ENCODE measurements at regions of chr7 and their contacts with region 1.

Region 1: DNA sequence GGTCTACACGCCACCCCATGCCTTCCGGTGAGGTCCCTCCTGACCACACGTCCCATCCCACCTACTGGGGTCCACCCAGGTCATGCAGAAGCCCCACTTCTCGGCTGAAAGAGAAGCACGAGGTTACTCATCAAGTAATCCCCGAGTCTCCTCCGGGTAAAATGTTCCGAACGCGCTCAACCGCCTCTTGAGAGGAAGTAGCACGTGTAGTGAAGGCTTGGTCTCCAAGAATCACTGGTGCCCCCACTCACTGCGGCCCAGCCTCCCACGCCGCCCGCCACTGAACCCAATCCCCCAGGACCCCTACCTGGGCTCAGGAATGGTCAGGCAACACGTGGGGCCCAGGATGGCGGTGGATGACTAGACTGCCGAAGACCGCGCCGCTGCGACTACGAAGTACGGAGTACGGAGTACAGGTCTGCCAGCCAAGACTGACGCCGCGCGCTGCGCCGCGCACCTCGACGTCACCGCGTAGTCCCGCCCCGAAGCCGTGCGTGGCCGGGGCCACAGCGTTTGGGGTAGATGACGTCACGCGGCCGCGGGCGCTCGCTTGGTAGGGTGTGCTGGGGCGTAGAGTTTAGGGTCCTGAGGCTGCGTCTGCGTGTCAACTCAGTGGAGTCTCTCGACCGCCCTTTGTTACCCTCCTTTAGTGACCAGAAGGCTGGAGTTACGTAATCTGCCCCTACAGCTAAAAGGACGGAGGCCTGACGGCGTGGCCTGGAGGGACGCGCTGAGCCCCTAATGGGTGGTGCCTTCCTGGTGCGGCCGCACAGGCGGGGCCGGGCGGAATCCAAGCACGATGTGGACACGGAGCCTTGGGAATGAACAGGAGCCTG is 7.6 kb upstream of the MYO1G start:
- DNase-seq: peak; percentile 98
- ATAC-seq: peak; percentile 94
- H3K4me3 ChIP-seq: peak overlapping the region; percentile 62 to 92 (median 73)
- H3K4me3 Mint-ChIP-seq: peak overlapping the region; percentile 98
- H3K27ac ChIP-seq: peak overlapping the region; percentile 97 to 98
- H3K27ac Mint-ChIP-seq: peak overlapping the region; percentile 98
- H3K4me1 ChIP-seq: peaks cover 29 to 39% of the 10 kb centered on the region in 2 donors
- H3K4me1 Mint-ChIP-seq: peaks cover 51% of the 10 kb centered on the region
- H3K27me3 ChIP-seq: no peaks in the 10 kb centered on the region
- H3K27me3 Mint-ChIP-seq: no peaks in the 10 kb centered on the region
- CTCF ChIP-seq: no peak

Region 2: GRCh38 chr7:44581879-44582603 is 404.4 kb before region 1 on chr7 and contains the start of gene TMED4:
- CTCF ChIA-PET with region 1: no interaction called
- POLR2A ChIA-PET with region 1: no interaction called
- intact Hi-C with region 1: loop called (anchors 1 kb)
- DNase-seq: peak; percentile 100
- ATAC-seq: peak; percentile 92
- H3K4me3 ChIP-seq: peak within 1 kb of the TSS; percentile 72 to 99 (median 88)
- H3K4me3 Mint-ChIP-seq: peak within 1 kb of the TSS; percentile 96
- H3K27ac ChIP-seq: peak within 1 kb of the TSS; percentile 92 to 97
- H3K27ac Mint-ChIP-seq: peak within 1 kb of the TSS; percentile 99
- H3K4me1 ChIP-seq: peaks cover 21% of the 10 kb centered on the region in 2 donors
- H3K4me1 Mint-ChIP-seq: peaks cover 28% of the 10 kb centered on the region
- H3K27me3 ChIP-seq: no peaks in the 10 kb centered on the region
- H3K27me3 Mint-ChIP-seq: no peaks in the 10 kb centered on the region
- CTCF ChIP-seq: no peak
- total RNA-seq, gene TMED4: 84.0 and 84.1 TPM in 2 replicates

Region 3: GRCh38 chr7:44973610-44974401 is 12.6 kb before region 1 on chr7:
- CTCF ChIA-PET with region 1: interaction called, 14 read pairs
- POLR2A ChIA-PET with region 1: interaction called, 6 read pairs
- intact Hi-C with region 1: loop called (anchors 1 kb)
- DNase-seq: no peak
- ATAC-seq: no peak
- H3K4me3 ChIP-seq: no peak overlapping the region
- H3K4me3 Mint-ChIP-seq: no peak overlapping the region
- H3K27ac ChIP-seq: no peak overlapping the region
- H3K27ac Mint-ChIP-seq: peak overlapping the region; percentile 15
- H3K4me1 ChIP-seq: peaks cover 14 to 41% of the 10 kb centered on the region in 2 donors
- H3K4me1 Mint-ChIP-seq: peaks cover 38% of the 10 kb centered on the region
- H3K27me3 ChIP-seq: no peaks in the 10 kb centered on the region
- H3K27me3 Mint-ChIP-seq: no peaks in the 10 kb centered on the region
- CTCF ChIP-seq: peak; percentile 41